ENCODE measurements at regions of chr9 and their contacts with region 1.

Region 1: DNA sequence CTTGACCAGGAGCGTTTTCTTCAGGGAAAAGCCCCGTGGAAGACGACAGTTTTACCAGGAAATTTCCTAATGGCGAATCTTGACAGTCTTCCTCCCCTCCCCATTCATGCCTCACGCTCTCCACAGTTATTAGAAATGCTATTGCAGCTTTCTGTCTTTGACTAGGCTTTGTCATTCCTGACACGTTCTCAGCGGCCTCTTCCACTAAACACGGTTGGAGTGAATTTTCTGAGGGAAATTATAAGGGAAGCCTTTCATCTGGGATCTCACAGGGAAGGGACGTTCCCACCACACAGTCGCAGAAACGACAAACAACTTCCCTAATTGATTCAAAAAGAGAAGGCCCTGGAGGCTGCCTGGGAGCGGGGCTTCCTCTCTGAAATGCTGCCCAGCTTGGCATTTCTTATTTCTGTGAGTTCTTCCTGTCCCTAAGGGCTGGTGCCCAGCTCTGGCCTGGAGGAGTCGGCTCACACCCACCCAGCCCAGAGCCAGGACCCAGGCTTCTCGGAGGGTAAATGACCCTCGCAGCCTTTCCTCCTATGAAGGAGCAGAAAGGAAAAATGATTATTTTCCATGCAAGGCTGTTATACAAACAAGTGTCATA is 57.1 kb upstream of the PPP1R26 start:
- DNase-seq: peak; percentile 45

Region 2: DNA sequence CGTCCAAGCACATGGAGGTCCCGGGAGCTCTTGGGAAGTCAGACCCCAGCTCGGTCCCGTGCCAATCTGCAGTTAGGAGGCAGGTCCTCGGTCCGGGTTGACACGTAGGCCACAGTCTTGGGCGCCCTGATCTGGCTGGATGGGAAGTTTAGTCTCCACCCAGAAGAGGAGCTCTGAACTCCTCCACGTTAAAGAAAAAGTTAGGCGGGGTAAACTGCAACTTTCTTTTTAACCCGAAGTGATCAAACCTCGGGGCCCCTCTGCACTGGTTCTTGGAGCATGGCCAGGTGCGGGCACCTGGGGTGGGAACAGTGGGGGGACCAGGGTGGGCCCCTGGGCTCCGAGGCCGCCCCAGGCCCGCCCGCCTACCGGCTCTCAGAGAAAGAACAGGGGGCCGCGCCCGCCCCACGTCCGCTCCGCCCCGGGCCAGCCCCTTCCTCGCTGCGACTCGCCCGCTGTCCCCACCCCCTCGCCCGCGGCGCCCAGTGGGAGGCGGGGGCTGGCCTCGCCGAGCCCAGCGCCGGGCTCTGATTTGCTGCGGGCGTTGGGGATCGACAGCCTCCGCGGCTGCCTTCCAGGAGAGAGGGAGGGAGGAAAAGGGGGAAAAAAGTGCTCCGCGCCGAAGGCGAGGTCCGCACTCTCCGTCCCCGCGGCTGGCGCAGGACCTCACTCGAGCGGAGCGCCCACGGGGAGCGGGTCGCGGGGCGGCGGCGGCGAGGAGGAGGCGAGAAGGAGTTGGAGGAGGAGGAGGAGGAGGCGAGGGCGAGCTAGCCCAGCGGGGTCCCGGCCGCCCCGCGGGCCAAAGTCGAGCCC is 781.1 kb before region 1 on chr9 and contains the start of gene COL5A1:
- intact Hi-C with region 1: loop called in 1 of 2 experiments (anchors 5 kb)
- DNase-seq: peak; percentile 97
- total RNA-seq, gene COL5A1: 71.1 to 196 TPM

Region 3: DNA sequence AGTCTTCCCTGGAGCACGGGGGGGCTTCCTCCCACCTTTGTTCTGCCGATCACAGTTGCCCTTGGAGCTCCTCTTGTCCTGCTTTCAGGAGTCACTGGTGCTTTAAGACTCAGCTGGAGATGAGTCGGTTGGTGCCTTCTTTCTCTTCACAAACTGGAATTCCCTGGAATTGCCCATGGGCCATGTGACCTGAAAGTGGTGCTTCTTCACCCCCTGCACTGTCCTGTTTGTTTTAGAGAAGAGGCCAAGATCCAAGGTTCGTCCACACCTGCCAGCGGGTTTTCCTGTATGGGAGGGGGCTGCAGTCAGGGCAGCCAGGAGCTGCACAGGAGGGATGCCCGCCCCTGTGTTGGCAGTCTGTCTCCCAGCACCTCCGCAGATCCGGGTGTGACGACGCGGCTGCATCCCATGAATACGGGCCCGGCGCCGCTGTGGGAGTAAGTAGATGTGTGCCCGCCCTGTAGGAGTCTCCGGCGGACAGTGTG is 68.6 kb after region 1 on chr9:
- intact Hi-C with region 1: no loop called
- DNase-seq: no peak

Measured in posterior vena cava (tissue), 2 donors.